SK-N-SH (cell line): ENCODE measurements at regions of chr4 and their contacts with region 1.

Region 1: GRCh38 chr4:8176547-8177399 is 18.2 kb upstream of the ABLIM2 start:
- DNase-seq: peak; percentile 89
- H3K4me3 ChIP-seq: no peak overlapping the region; a peak in 1 of 4 replicates
- H3K27ac ChIP-seq: no peak overlapping the region; a peak in 1 of 4 replicates
- H3K4me1 ChIP-seq: peaks cover 0 to 18% of the 10 kb centered on the region in 2 experiments; a peak in 1 of 4 replicates
- H3K27me3 ChIP-seq: 0 out of 2 replicates have a peak, but pooled peaks cover under 1% of the 10 kb centered on the region
- CTCF ChIP-seq: peak; percentile 68
- EP300 ChIP-seq: no peak
- RAD21 ChIP-seq: peak; percentile 94

Region 2: DNA sequence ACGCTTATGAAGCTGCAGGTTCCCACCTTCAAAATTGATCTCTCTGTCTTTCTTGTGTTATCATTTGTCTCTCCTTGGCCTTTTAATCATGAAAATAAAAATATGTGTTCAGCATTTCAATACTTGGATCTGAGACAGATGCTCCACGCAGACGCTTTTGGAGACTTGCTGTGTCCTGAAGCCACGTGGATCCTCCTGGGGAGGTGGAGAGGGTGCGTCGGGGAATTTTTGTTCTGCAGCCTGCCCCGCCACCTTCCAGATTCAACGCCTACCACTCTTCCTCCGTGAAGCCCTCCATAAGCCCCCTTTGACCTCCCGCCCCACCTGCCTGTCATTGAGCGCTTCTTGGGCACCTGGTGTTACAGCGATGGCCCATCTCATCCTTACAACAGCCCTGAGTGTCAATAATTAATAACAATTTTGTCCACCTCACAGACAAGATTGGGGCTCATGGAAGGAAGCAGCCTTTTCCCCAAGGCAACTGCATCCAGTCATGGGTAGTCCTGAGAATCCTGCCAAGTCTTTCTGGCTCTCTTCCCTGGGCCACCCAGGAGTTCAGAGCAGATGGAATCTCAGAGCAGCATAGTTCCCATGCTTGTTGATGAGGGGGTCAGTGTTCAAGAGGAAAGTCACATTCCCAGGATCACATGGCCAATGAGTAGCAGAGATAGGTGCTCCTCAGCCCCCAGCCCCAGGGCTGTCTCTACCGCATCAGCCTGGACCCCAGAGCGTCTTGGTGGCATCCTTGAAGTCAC is 569.4 kb before region 1 on chr4:
- CTCF ChIA-PET with region 1: no interaction called
- POLR2A ChIA-PET with region 1: no interaction called
- DNase-seq: no peak
- H3K4me3 ChIP-seq: no peak overlapping the region
- H3K27ac ChIP-seq: no peak overlapping the region
- H3K4me1 ChIP-seq: peaks cover 0 to 10% of the 10 kb centered on the region in 2 experiments; a peak in 1 of 4 replicates
- H3K27me3 ChIP-seq: no peaks in the 10 kb centered on the region
- CTCF ChIP-seq: no peak
- EP300 ChIP-seq: no peak
- RAD21 ChIP-seq: no peak

Region 3: GRCh38 chr4:8192748-8193738 is 16.3 kb after region 1 on chr4:
- CTCF ChIA-PET with region 1: interaction called, 58 read pairs
- POLR2A ChIA-PET with region 1: interaction called, 3 read pairs
- DNase-seq: peak; percentile 78
- H3K4me3 ChIP-seq: no peak overlapping the region
- H3K27ac ChIP-seq: peak overlapping the region in 1 of 2 experiments; percentile 23; a peak in 1 of 4 replicates
- H3K4me1 ChIP-seq: peaks cover 0 to 25% of the 10 kb centered on the region in 2 experiments; a peak in 1 of 4 replicates
- H3K27me3 ChIP-seq: no peaks in the 10 kb centered on the region
- CTCF ChIP-seq: peak; percentile 14; the same call in 1 of the 2 replicates
- EP300 ChIP-seq: 0 out of 4 replicates have a peak, but pooled peaks of 1 of the 2 experiments have one; percentile 30
- RAD21 ChIP-seq: peak; percentile 58

Region 4: GRCh38 chr4:8221476-8221875 is 44.7 kb after region 1 on chr4:
- CTCF ChIA-PET with region 1: interaction called, 42 read pairs
- POLR2A ChIA-PET with region 1: no interaction called
- DNase-seq: peak; percentile 80
- H3K4me3 ChIP-seq: no peak overlapping the region
- H3K27ac ChIP-seq: peak overlapping the region; percentile 40 to 98; a peak in 3 of 4 replicates
- H3K4me1 ChIP-seq: peaks cover 0 to 27% of the 10 kb centered on the region in 2 experiments; a peak in 1 of 4 replicates
- H3K27me3 ChIP-seq: no peaks in the 10 kb centered on the region
- CTCF ChIP-seq: no peak
- EP300 ChIP-seq: peak in 1 of 2 experiments; percentile 97; a peak in 2 of 4 replicates
- RAD21 ChIP-seq: no peak

Region 5: DNA sequence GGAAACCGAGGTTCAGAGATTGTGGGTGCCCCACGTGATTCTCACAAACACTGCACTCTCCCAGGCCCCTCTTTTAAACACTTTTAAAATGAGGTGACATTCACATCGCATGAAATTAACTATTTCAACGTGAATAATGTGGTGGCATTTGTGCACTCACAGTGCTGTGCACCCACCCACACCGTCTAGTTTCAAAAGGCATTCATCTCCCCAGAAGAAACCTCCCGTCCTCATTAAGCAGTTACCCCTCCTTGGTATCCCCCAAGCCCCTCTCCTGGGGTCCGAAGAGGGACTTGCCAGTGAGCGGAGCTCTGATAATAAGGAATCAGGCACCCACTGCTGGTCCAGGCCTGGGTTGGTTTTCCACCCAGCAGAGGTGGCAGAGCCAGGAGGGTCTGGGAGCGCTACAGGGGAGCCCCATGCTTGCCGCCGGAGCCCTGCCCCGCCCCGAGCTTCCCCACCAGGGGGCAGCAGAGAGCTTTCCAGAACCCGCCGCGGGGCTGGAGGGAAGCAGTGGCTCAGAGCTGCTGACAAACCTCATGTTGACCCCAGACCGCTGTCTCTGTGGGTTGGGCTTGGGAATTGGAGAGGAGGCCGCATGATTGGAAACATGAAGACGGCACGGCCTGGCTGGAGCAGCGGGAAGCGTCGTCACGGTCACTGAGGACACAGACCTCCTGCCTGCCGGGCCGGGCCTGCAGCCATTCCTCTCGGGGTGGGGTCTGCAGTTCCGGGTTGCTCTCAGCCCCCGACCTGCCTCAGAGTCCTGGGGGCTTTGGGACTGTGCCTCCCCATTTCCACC is 65.3 kb after region 1 on chr4:
- CTCF ChIA-PET with region 1: interaction called, 45 read pairs
- POLR2A ChIA-PET with region 1: interaction called, 3 read pairs
- DNase-seq: peak; percentile 98
- H3K4me3 ChIP-seq: peak overlapping the region in 1 of 2 experiments; percentile 44; a peak in 1 of 4 replicates
- H3K27ac ChIP-seq: peak overlapping the region in 1 of 2 experiments; percentile 73; a peak in 1 of 4 replicates
- H3K4me1 ChIP-seq: peaks cover 4 to 8% of the 10 kb centered on the region in 2 experiments; a peak in 1 of 4 replicates
- H3K27me3 ChIP-seq: no peaks in the 10 kb centered on the region
- CTCF ChIP-seq: peak; percentile 93
- EP300 ChIP-seq: no peak
- RAD21 ChIP-seq: peak; percentile 94

Region 6: DNA sequence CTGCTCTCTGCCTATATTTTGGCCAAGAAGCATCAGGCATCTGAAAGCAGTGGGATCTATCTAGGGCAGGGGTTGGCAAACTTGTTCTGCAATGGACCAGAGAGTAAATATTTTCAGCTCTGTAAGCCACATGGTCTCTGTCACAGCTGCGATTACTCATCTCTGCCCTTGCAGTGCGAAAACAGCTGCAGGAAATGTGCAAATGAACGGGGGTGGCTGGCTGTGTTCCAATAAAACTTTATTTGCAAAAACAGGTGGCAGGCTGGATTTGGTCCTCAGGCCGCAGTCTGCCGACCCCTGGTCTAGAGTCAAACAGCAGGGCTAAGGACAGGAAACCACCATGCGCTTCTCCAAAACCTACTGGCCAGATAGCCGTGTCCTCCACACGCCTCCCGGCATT is 215.2 kb after region 1 on chr4:
- CTCF ChIA-PET with region 1: interaction called, 13 read pairs
- POLR2A ChIA-PET with region 1: no interaction called
- DNase-seq: no peak
- H3K4me3 ChIP-seq: no peak overlapping the region
- H3K27ac ChIP-seq: peak overlapping the region in 1 of 2 experiments; percentile 11; a peak in 1 of 4 replicates
- H3K4me1 ChIP-seq: peaks cover 14 to 44% of the 10 kb centered on the region in 2 experiments
- H3K27me3 ChIP-seq: no peaks in the 10 kb centered on the region
- CTCF ChIP-seq: no peak
- EP300 ChIP-seq: peak in 1 of 2 experiments; percentile 15; a peak in 1 of 4 replicates
- RAD21 ChIP-seq: no peak

Region 7: GRCh38 chr4:8410641-8411271 is 234.0 kb after region 1 on chr4:
- CTCF ChIA-PET with region 1: interaction called, 25 read pairs
- POLR2A ChIA-PET with region 1: no interaction called
- DNase-seq: peak; percentile 88
- H3K4me3 ChIP-seq: no peak overlapping the region; a peak in 1 of 4 replicates
- H3K27ac ChIP-seq: no peak overlapping the region; a peak in 1 of 4 replicates
- H3K4me1 ChIP-seq: peaks cover 0 to 4% of the 10 kb centered on the region in 2 experiments; a peak in 1 of 4 replicates
- H3K27me3 ChIP-seq: no peaks in the 10 kb centered on the region
- CTCF ChIP-seq: peak; percentile 47
- EP300 ChIP-seq: no peak
- RAD21 ChIP-seq: peak; percentile 78

Region 8: DNA sequence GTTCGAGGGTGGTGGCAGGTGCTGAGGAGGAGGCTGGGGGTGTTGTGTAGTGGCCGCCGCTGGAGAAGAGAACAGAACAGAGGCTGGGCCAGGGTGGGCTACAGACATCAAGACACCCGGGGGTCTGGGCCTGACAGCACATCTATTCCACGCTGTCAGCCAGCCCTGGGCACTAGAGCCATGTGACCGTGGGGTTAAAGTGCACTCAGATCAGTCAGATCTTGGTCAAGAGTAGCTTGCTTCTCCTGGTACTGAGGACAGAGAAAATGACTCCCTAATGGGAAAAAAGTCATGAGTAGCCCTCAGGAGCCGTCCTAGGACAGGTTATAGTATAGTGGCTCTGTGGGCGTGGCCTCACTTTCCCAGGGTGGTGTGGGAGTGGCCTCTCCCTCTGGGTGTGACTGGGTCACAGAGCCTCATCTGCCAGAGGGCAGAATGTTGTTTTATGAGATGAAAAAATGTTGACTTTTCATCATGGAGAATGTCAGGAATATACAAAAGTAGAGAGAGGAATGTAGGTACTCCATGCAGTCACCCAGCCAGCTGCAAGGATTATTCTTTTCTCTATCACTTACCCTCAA is 283.2 kb after region 1 on chr4:
- CTCF ChIA-PET with region 1: no interaction called
- POLR2A ChIA-PET with region 1: no interaction called
- DNase-seq: no peak
- H3K4me3 ChIP-seq: no peak overlapping the region
- H3K27ac ChIP-seq: no peak overlapping the region
- H3K4me1 ChIP-seq: no peaks in the 10 kb centered on the region
- H3K27me3 ChIP-seq: no peaks in the 10 kb centered on the region
- CTCF ChIP-seq: no peak
- EP300 ChIP-seq: no peak
- RAD21 ChIP-seq: no peak